ENCODE measurements at regions of chr4 and their contacts with region 1.

Region 1: DNA sequence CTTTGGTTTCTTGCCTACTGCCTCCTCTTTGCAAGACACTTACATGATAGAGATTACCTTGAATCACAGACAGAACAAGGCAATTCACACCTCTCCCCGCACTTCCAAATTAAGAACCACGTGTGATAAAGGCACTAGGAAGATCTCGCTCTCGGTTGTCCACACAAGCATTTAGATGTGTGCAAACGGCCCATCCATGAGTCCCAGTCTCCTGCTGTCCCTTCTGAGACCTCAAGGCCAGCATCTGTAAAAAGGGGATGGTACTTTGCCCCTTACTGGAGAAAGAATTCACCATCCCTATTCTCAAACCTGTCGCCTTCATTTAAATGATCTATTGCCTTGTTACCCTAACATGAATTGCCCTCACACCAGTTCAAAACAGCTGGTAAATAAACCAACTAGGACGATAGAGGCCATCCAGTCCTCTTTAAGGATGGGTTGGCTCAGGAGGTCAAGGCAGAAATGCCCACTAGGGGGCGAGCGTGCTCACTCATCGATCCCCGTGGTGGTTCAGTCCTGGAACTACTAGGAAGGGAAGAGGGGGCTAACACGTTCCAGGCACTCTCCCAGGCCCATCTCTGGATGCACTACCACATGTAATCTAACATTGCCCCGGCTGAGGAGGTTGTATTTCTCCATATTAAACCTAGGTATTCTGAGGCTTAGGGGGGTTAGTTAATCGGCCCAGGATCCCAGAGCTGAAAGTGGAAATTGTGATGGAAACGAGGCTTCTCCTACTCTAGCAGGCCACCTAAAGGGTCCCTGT is 95.8 kb downstream of the DHX15 start:
- DNase-seq: peak; percentile 55 to 67
- ATAC-seq: peak; percentile 55 to 79 (median 60)
- H3K4me3 ChIP-seq: no peak overlapping the region
- H3K4me3 Mint-ChIP-seq: no peak overlapping the region
- H3K27ac ChIP-seq: no peak overlapping the region
- H3K27ac Mint-ChIP-seq: no peak overlapping the region
- H3K4me1 ChIP-seq: no peaks in the 10 kb centered on the region
- H3K4me1 Mint-ChIP-seq: peaks cover 0 to 5% of the 10 kb centered on the region in 2 donors
- H3K27me3 ChIP-seq: no peaks in the 10 kb centered on the region
- H3K27me3 Mint-ChIP-seq: peaks cover 23% of the 10 kb centered on the region in 2 donors
- CTCF ChIP-seq: peak; percentile 73

Region 2: GRCh38 chr4:24226023-24226422 is 262.6 kb before region 1 on chr4:
- intact Hi-C with region 1: no loop called
- DNase-seq: no peak
- ATAC-seq: no peak
- H3K4me3 ChIP-seq: no peak overlapping the region
- H3K4me3 Mint-ChIP-seq: no peak overlapping the region
- H3K27ac ChIP-seq: no peak overlapping the region
- H3K27ac Mint-ChIP-seq: no peak overlapping the region
- H3K4me1 ChIP-seq: no peaks in the 10 kb centered on the region
- H3K4me1 Mint-ChIP-seq: no peaks in the 10 kb centered on the region
- H3K27me3 ChIP-seq: no peaks in the 10 kb centered on the region
- H3K27me3 Mint-ChIP-seq: no peaks in the 10 kb centered on the region
- CTCF ChIP-seq: no peak

Region 3: GRCh38 chr4:24686871-24687680 is 198.5 kb after region 1 on chr4:
- intact Hi-C with region 1: loop called (anchors 1 kb)
- DNase-seq: no peak
- ATAC-seq: no peak
- H3K4me3 ChIP-seq: no peak overlapping the region
- H3K4me3 Mint-ChIP-seq: no peak overlapping the region
- H3K27ac ChIP-seq: no peak overlapping the region
- H3K27ac Mint-ChIP-seq: no peak overlapping the region
- H3K4me1 ChIP-seq: no peaks in the 10 kb centered on the region
- H3K4me1 Mint-ChIP-seq: no peaks in the 10 kb centered on the region
- H3K27me3 ChIP-seq: no peaks in the 10 kb centered on the region
- H3K27me3 Mint-ChIP-seq: peaks cover 19 to 22% of the 10 kb centered on the region in 2 donors
- CTCF ChIP-seq: peak; percentile 35